Testis (tissue), 5 donors: ENCODE measurements at regions of chr4 and their contacts with region 1.

Region 1: DNA sequence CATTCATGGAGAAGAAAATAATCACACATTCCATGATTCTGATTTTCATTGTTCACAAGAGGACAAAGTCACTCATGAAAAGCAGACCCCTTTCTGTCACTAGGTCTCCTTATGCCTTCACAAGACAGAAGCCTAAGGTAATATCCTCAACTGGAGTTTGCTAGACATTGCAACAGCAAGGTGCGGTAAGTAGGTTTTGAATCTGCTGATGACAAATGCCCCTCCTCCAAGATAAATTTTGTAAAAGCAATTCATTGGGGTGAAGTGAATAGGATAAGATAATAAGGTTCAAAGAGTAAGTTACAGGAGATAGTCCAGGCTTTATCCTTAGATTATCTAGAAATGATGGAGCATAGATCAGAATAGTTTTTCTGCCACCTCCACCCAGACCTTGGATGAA is 16.1 kb upstream of the CYP2U1 start:
- DNase-seq: no peak
- H3K4me3 ChIP-seq: no peak overlapping the region
- H3K27ac ChIP-seq: no peak overlapping the region
- H3K4me1 ChIP-seq: no peaks in the 10 kb centered on the region
- H3K27me3 ChIP-seq: no peaks in the 10 kb centered on the region
- CTCF ChIP-seq: no peak
- POLR2A ChIP-seq: no peak

Region 2: DNA sequence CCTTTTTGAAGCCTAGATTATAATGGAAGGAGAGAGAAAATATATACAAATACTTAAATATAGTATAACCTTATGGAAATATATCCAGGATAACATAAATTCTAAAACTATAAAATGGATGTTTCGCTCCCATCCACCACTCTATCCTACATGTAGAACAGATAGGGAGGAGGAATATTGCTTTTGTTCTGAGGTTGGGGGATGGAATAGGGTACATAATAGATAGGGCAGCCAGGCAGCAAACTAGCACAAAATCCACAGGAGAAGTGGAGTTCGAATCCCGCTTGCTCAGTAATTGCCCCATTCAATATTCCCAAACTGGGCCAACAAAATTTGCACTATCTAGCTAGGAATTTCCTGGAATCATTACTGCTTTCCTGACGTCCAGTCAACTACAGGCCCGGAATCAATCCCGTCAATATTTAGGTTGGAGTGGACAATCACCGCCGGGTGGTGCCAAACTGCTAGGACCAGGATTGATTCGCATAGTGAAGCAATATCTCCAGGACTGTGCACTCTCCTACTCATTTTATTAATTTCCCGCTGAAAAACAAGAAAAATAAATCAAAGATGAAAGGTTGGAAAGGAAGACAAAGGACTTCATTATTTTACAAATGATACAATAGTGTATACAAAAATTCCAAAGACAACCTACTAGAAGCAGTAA is 154.8 kb before region 1 on chr4:
- intact Hi-C with region 1: loop called (anchors 5 kb)
- DNase-seq: no peak
- H3K4me3 ChIP-seq: no peak overlapping the region
- H3K27ac ChIP-seq: no peak overlapping the region
- H3K4me1 ChIP-seq: no peaks in the 10 kb centered on the region
- H3K27me3 ChIP-seq: no peaks in the 10 kb centered on the region
- CTCF ChIP-seq: no peak
- POLR2A ChIP-seq: no peak